HepG2 (cell line): ENCODE measurements at regions of chr11 and their contacts with region 1.

Region 1: GRCh38 chr11:27331981-27332380 is 31.0 kb downstream of the CCDC34 start:
- DNase-seq: peak; percentile 12
- ATAC-seq: no peak
- H3K4me3 ChIP-seq: no peak overlapping the region; a peak in 1 of 6 replicates
- H3K27ac ChIP-seq: peak overlapping the region; percentile 78
- H3K4me1 ChIP-seq: peaks cover 82% of the 10 kb centered on the region
- H3K27me3 ChIP-seq: no peaks in the 10 kb centered on the region
- CTCF ChIP-seq: no peak
- EP300 ChIP-seq: no peak
- POLR2A ChIP-seq: no peak
- RAD21 ChIP-seq: no peak

Region 2: GRCh38 chr11:27263046-27263445 is 68.9 kb before region 1 on chr11:
- CTCF ChIA-PET with region 1: no interaction called
- POLR2A ChIA-PET with region 1: no interaction called
- in situ Hi-C with region 1: no loop called
- intact Hi-C with region 1: no loop called
- DNase-seq: no peak
- ATAC-seq: no peak
- H3K4me3 ChIP-seq: no peak overlapping the region
- H3K27ac ChIP-seq: no peak overlapping the region
- H3K4me1 ChIP-seq: no peaks in the 10 kb centered on the region
- H3K27me3 ChIP-seq: peaks cover 5 to 13% of the 10 kb centered on the region in 2 experiments; a peak in 3 of 5 replicates
- CTCF ChIP-seq: no peak
- EP300 ChIP-seq: no peak
- POLR2A ChIP-seq: no peak
- RAD21 ChIP-seq: no peak

Region 3: GRCh38 chr11:27277843-27278242 is 54.1 kb before region 1 on chr11:
- CTCF ChIA-PET with region 1: no interaction called
- POLR2A ChIA-PET with region 1: no interaction called
- in situ Hi-C with region 1: no loop called
- intact Hi-C with region 1: loop called (anchors 2 kb)
- DNase-seq: no peak
- ATAC-seq: no peak
- H3K4me3 ChIP-seq: no peak overlapping the region
- H3K27ac ChIP-seq: no peak overlapping the region
- H3K4me1 ChIP-seq: peaks cover 54% of the 10 kb centered on the region
- H3K27me3 ChIP-seq: no peaks in the 10 kb centered on the region
- CTCF ChIP-seq: no peak
- EP300 ChIP-seq: no peak
- POLR2A ChIP-seq: no peak
- RAD21 ChIP-seq: no peak

Region 4: GRCh38 chr11:27319072-27319471 is 12.9 kb before region 1 on chr11:
- CTCF ChIA-PET with region 1: no interaction called
- POLR2A ChIA-PET with region 1: interaction called, 10 read pairs
- in situ Hi-C with region 1: no loop called
- intact Hi-C with region 1: no loop called
- DNase-seq: peak; percentile 48
- ATAC-seq: no peak
- H3K4me3 ChIP-seq: no peak overlapping the region
- H3K27ac ChIP-seq: no peak overlapping the region
- H3K4me1 ChIP-seq: peaks cover 46% of the 10 kb centered on the region
- H3K27me3 ChIP-seq: no peaks in the 10 kb centered on the region
- CTCF ChIP-seq: no peak
- EP300 ChIP-seq: no peak
- POLR2A ChIP-seq: no peak
- RAD21 ChIP-seq: no peak

Region 5: DNA sequence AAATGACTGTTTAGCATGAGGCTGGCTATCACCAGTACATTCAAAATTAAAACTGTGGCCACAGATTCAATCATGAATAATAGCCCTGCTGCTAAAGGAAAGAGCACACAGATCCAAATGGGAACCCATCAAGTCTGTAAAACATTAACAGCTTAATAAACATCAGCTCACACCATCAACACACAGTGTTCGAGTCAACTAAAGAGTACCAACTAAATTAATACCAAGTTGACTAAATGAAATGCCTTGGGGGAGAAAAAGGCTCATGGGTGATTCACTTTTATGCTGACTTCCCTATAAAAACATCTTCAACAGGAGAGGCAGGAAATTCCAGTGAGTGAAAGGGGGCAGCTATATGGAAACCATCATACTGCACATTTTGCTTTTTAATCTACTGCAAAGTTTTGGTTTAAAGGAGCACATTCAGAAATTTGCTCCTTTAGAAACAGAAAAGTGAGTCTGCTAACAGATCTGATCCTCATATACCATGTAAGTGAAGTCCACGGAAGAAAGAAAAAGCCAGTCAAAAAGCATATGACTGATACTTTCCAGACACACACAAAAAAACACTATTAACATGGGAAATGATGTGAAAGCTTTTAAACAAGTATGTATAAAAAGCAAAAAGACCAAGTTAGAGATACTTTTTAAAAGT is 124.3 kb after region 1 on chr11:
- CTCF ChIA-PET with region 1: no interaction called
- POLR2A ChIA-PET with region 1: no interaction called
- in situ Hi-C with region 1: no loop called
- intact Hi-C with region 1: no loop called
- DNase-seq: peak; percentile 55
- ATAC-seq: peak; percentile 52
- H3K4me3 ChIP-seq: peak overlapping the region in 1 of 3 experiments; percentile 23; a peak in 1 of 6 replicates
- H3K27ac ChIP-seq: peak overlapping the region; percentile 5
- H3K4me1 ChIP-seq: peaks cover 90% of the 10 kb centered on the region
- H3K27me3 ChIP-seq: no peaks in the 10 kb centered on the region
- CTCF ChIP-seq: no peak
- EP300 ChIP-seq: peak in 1 of 2 experiments; percentile 23; a peak in 1 of 4 replicates
- POLR2A ChIP-seq: no peak
- RAD21 ChIP-seq: no peak

Region 6: DNA sequence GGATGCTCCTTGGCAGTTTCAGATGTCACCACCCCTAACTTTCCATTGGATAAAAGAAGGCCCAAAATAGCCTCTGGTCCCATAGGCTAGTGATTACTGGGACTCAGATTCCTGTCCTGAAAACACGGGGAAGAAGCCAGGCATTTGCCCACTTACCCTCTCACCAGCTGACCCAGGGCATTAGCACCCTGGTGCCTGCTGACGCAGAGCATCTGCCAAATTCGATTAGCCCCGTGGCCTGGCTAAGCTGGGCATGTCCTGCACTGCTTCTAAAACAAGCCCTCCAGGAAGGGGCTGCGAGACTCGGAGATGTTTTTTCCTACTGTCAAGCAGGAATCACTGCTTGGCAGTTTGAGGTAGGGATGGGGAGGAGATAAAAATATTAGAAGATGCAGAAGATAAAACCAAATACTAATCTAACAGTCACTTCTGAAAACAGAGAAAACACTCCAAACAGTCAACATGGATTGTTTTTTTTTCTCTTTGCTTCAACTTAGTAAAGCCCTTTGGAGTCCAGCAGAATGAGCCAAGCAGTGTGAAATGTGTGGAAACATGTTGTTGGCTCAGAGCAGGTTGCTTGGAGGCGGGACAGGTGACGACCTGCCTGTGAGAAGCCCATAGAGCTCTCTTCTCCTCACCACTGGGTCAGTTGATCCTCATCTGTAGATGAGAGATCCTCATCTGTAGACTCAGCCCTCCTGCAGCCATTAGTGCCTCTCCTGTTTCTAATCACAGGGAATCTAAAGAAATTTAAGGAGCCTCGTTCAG is 314.3 kb after region 1 on chr11:
- CTCF ChIA-PET with region 1: no interaction called
- POLR2A ChIA-PET with region 1: no interaction called
- in situ Hi-C with region 1: no loop called
- intact Hi-C with region 1: no loop called
- DNase-seq: no peak
- ATAC-seq: no peak
- H3K4me3 ChIP-seq: no peak overlapping the region
- H3K27ac ChIP-seq: no peak overlapping the region
- H3K4me1 ChIP-seq: no peaks in the 10 kb centered on the region
- H3K27me3 ChIP-seq: no peaks in the 10 kb centered on the region
- CTCF ChIP-seq: no peak
- EP300 ChIP-seq: no peak
- POLR2A ChIP-seq: no peak
- RAD21 ChIP-seq: no peak